ENCODE measurements at regions of chr17 and their contacts with region 1.

Region 1: DNA sequence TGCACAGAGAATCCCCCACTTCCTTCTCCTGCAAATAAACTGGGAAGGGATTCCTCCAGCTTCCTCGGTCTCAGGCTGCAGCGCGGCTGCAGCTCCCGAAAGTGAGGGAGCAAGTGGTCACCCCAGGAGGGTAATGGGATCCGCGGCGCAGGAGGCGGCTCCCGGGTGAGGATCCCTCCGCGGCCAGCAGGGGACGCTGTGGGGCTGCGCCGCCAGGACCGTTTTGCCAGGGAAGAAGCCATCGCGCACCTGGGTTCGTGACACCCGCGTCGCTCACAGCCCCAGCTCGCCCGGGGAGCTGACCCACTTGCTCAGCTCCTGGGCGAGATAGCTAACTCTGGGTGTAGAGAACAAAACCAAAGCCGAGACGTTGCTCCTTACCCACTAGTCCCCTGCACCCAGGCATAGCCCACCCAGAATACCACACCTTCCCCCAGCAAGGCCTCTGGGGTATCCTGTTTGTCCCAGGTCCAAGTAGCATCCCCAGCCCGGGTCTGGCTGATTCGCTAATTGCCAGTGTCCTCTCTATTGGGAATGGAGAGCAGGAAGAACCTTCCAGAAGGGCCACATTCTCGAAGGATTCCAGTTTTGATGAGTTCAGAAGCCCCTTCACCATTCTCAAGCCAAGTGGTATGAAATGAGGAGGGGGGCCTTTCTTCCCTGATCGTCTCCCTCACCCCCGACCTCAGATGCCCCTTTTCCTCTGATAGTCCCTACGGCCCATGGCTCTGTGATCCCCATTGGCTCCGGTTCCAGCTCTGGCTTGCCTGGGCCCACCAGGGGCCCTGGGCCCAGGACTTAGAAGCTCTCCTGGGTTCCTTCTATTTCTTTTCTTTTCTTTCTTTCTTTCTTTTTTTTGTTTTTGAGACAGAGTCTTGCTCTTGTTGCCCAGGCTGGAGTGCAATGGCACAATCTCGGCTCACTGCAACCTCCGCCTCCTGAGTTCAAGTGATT is 14.1 kb downstream of the CYGB start:
- DNase-seq: peak; percentile 85
- H3K4me3 ChIP-seq: no peak overlapping the region
- H3K27ac ChIP-seq: no peak overlapping the region
- H3K4me1 ChIP-seq: peaks cover 0 to 27% (median 17%) of the 10 kb centered on the region in 4 donors
- H3K27me3 ChIP-seq: peaks cover 0 to 30% (median 9%) of the 10 kb centered on the region in 3 donors
- CTCF ChIP-seq: peak; percentile 96 to 100 (median 99)
- EP300 ChIP-seq: no peak
- POLR2A ChIP-seq: no peak

Region 2: GRCh38 chr17:76547184-76547641 is 23.9 kb after region 1 on chr17:
- intact Hi-C with region 1: loop called (anchors 1 kb)
- DNase-seq: no peak
- H3K4me3 ChIP-seq: no peak overlapping the region
- H3K27ac ChIP-seq: no peak overlapping the region
- H3K4me1 ChIP-seq: peaks cover 0 to 29% (median 11%) of the 10 kb centered on the region in 4 donors
- H3K27me3 ChIP-seq: peaks cover 0 to 23% (median 19%) of the 10 kb centered on the region in 3 donors
- CTCF ChIP-seq: peak; percentile 37 to 67 (median 58)
- EP300 ChIP-seq: no peak
- POLR2A ChIP-seq: no peak

Region 3: GRCh38 chr17:76585818-76586593 is 62.6 kb after region 1 on chr17 and contains the start of gene ST6GALNAC2:
- intact Hi-C with region 1: loop called (anchors 2 kb)
- DNase-seq: peak; percentile 79
- H3K4me3 ChIP-seq: peak within 1 kb of the TSS; percentile 39 to 60 (median 52)
- H3K27ac ChIP-seq: peak within 1 kb of the TSS; percentile 52 to 67 (median 60)
- H3K4me1 ChIP-seq: peaks cover 0 to 26% (median 20%) of the 10 kb centered on the region in 4 donors
- H3K27me3 ChIP-seq: peaks cover 19 to 56% (median 19%) of the 10 kb centered on the region in 3 donors
- CTCF ChIP-seq: peak in 2 of 4 experiments; percentile 22 to 40
- EP300 ChIP-seq: no peak
- POLR2A ChIP-seq: no peak
- total RNA-seq, gene ST6GALNAC2: 4.1 to 16.4 (median 9.0) TPM

Region 4: DNA sequence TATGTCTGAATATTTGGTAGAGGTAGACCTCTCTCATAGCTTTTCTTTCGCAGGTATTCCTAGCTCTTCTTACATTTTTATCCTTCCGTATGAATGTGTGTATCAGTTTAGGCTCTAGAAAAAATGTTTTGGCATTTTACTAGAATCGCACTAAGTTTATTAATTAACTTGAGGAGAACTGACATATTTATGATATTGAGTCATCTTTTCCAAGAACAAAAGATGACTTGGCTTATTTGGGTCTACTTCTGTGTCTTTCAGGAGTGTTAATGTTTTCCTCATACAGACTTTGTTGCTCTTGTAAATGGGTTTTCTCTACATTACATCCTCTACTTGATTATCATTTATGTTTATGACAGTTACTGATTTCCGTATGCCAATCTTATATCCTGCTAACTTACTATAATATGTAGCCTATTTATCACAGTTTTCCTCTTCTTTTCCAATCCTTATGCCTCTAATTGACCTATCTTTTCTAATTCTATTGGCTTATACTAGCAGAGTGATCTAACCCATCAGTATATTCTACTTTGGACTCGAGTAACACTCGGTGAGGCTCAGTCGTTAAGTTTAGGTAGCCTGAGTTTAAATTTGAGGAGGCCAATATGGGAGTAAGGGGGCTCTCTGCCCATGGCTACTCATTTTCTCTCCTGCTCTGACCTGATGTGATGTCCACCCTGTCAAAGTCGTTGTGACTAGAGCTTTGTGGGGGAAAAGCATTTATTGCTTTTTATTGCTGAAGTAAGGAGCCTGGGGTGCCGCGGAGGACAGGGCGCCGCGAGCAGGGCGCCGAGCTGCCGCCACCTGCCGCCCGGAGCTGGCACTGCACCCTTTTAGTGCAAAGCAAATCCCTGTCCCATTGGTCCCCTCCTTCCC is 100.1 kb after region 1 on chr17:
- intact Hi-C with region 1: loop called (anchors 1 kb)
- DNase-seq: peak; percentile 87
- H3K4me3 ChIP-seq: no peak overlapping the region
- H3K27ac ChIP-seq: no peak overlapping the region
- H3K4me1 ChIP-seq: peaks cover 0 to 9% (median 4%) of the 10 kb centered on the region in 4 donors
- H3K27me3 ChIP-seq: no peaks in the 10 kb centered on the region
- CTCF ChIP-seq: peak; percentile 84 to 93 (median 92)
- EP300 ChIP-seq: no peak
- POLR2A ChIP-seq: no peak